GM12878 (cell line): ENCODE measurements at regions of chr1 and their contacts with region 1.

Region 1: GRCh38 chr1:175129997-175130648 is 62.5 kb downstream of the KIAA0040 start:
- DNase-seq: no peak
- ATAC-seq: no peak; the same call in 2 of the 3 replicates
- H3K4me3 ChIP-seq: no peak overlapping the region
- H3K27ac ChIP-seq: no peak overlapping the region
- H3K4me1 ChIP-seq: peaks cover 28% of the 10 kb centered on the region
- H3K27me3 ChIP-seq: no peaks in the 10 kb centered on the region
- CTCF ChIP-seq: no peak
- EP300 ChIP-seq: no peak
- POLR2A ChIP-seq: no peak
- RAD21 ChIP-seq: no peak

Region 2: GRCh38 chr1:174769961-174770549 is 360.1 kb before region 1 on chr1:
- CTCF ChIA-PET with region 1: interaction called, 11 read pairs
- POLR2A ChIA-PET with region 1: no interaction called
- RAD21 ChIA-PET with region 1: interaction called, 5 read pairs
- SMC1A ChIA-PET with region 1: interaction called, 6 read pairs
- in situ Hi-C with region 1: loop called (anchors 5 kb)
- intact Hi-C with region 1: loop called (anchors 5 kb)
- DNase-seq: peak; percentile 17
- ATAC-seq: peak; percentile 71
- H3K4me3 ChIP-seq: no peak overlapping the region
- H3K27ac ChIP-seq: no peak overlapping the region
- H3K4me1 ChIP-seq: no peaks in the 10 kb centered on the region
- H3K27me3 ChIP-seq: no peaks in the 10 kb centered on the region
- CTCF ChIP-seq: peak; percentile 54 to 80 (median 61)
- EP300 ChIP-seq: no peak
- POLR2A ChIP-seq: no peak
- RAD21 ChIP-seq: peak; percentile 82

Region 3: GRCh38 chr1:175023043-175023921 is 106.8 kb before region 1 on chr1 and contains the start of gene MRPS14:
- CTCF ChIA-PET with region 1: interaction called, 199 read pairs
- POLR2A ChIA-PET with region 1: no interaction called
- RAD21 ChIA-PET with region 1: interaction called, 96 read pairs
- SMC1A ChIA-PET with region 1: interaction called, 56 read pairs
- in situ Hi-C with region 1: no loop called
- intact Hi-C with region 1: no loop called
- DNase-seq: peak; percentile 95
- ATAC-seq: peak; percentile 98
- H3K4me3 ChIP-seq: peak within 1 kb of the TSS; percentile 89
- H3K27ac ChIP-seq: peak within 1 kb of the TSS; percentile 90
- H3K4me1 ChIP-seq: no peaks in the 10 kb centered on the region; the same call in 1 of the 2 replicates
- H3K27me3 ChIP-seq: no peaks in the 10 kb centered on the region
- CTCF ChIP-seq: no peak
- EP300 ChIP-seq: no peak
- POLR2A ChIP-seq: peak; percentile 90
- RAD21 ChIP-seq: no peak
- polyA plus RNA-seq, gene MRPS14: 223 to 224 TPM

Region 4: GRCh38 chr1:175162955-175163354 is 32.8 kb after region 1 on chr1:
- CTCF ChIA-PET with region 1: no interaction called
- POLR2A ChIA-PET with region 1: no interaction called
- RAD21 ChIA-PET with region 1: no interaction called
- SMC1A ChIA-PET with region 1: no interaction called
- in situ Hi-C with region 1: no loop called
- intact Hi-C with region 1: no loop called
- DNase-seq: no peak
- ATAC-seq: no peak
- H3K4me3 ChIP-seq: no peak overlapping the region
- H3K27ac ChIP-seq: no peak overlapping the region
- H3K4me1 ChIP-seq: no peaks in the 10 kb centered on the region
- H3K27me3 ChIP-seq: no peaks in the 10 kb centered on the region
- CTCF ChIP-seq: no peak
- EP300 ChIP-seq: no peak
- POLR2A ChIP-seq: no peak
- RAD21 ChIP-seq: no peak